AG04449 (cell line): ENCODE measurements at regions of chr10 and their contacts with region 1.

Region 1: DNA sequence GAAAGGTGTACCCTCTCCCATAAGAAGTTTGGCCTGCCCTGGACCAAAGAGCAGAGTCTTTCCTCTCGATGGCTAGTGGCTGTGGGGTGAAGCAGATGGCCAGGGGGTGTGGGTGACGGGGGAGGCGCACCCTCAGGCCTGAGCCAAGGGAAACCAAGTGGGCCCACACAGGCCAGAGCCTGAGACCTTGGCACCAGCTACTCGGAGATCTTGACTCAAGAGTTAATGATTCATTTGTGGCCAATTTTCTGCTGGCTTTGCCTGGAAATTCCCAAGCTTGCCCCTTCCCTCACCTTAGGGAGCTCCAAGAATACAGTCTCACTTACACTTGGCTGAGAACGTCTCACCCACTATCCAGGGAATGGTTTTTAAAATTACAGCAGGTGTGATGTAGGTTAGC is 42.7 kb downstream of the ZMIZ1 start:
- DNase-seq: peak; percentile 16
- H3K4me3 ChIP-seq: no peak overlapping the region
- CTCF ChIP-seq: no peak

Region 2: GRCh38 chr10:79127151-79127961 is 15.9 kb after region 1 on chr10:
- CTCF ChIA-PET with region 1: interaction called, 12 read pairs
- POLR2A ChIA-PET with region 1: interaction called, 4 read pairs
- DNase-seq: no peak
- H3K4me3 ChIP-seq: no peak overlapping the region
- CTCF ChIP-seq: no peak